ENCODE measurements at regions of chr14 and their contacts with region 1.

Region 1: DNA sequence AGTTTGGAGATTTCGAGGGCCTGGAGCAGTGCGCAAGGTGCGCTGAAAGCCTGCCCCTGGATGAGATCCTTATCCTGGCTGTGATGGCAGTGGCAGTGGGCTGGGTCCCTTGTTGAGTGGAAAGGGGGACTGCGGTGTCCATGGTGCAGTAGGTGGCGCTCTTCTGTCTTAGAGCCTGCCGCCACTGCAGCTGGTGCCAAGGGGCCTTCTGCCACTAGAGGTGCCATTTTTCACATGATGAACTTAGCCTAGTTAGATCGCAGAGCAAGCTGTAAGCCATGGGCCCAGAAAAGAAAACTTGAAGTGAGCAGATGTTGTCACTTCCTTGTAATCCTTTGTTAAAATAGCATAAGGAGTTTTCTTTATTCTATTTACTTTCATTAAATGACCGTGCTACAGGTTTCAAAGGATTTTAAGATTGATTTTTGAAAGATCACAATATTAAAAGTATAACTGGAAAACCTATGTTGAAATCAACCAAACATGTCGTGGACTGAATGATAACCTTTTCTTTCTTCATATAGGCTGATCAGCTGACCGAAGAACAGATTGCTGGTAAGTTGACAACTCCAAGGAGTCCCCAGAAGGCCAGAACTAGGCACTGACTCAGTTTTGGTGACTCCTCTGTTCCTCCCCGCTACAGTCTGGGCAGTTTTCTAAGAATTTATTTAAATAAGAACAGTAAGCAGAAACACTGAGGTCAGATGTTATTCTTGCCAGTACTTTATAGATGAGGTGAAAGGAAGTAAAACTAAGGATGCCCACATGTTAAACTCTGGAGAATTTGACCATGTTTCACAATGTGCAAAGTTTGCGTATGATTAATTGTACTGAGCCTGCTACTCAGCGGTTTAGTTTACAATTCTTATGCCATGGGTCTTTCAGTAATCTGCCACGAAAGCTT is 3.0 kb downstream of the CALM1 start:
- DNase-seq: peak; percentile 78
- H3K4me3 ChIP-seq: peak overlapping the region; percentile 40 to 98 (median 91)
- H3K27ac ChIP-seq: peak overlapping the region; percentile 71
- H3K4me1 ChIP-seq: peaks cover 37% of the 10 kb centered on the region
- H3K27me3 ChIP-seq: no peaks in the 10 kb centered on the region
- CTCF ChIP-seq: peak; percentile 100

Region 2: GRCh38 chr14:90331497-90332435 is 68.0 kb before region 1 on chr14 and contains the start of gene NRDE2:
- CTCF ChIA-PET with region 1: no interaction called
- dilution Hi-C with region 1: no loop called
- in situ Hi-C with region 1: no loop called
- intact Hi-C with region 1: loop called (anchors 1 kb)
- DNase-seq: peak; percentile 90
- H3K4me3 ChIP-seq: peak within 1 kb of the TSS; percentile 59 to 71 (median 68)
- H3K27ac ChIP-seq: peak within 1 kb of the TSS; percentile 74
- H3K4me1 ChIP-seq: peaks cover 8% of the 10 kb centered on the region
- H3K27me3 ChIP-seq: peaks cover 3% of the 10 kb centered on the region
- CTCF ChIP-seq: no peak
- total RNA-seq, gene NRDE2: 10.3 to 12.7 TPM

Region 3: GRCh38 chr14:90518941-90519256 is 119.1 kb after region 1 on chr14:
- CTCF ChIA-PET with region 1: interaction called, 7 read pairs
- dilution Hi-C with region 1: no loop called
- in situ Hi-C with region 1: no loop called
- intact Hi-C with region 1: loop called (anchors 1 kb)
- DNase-seq: no peak
- H3K4me3 ChIP-seq: no peak overlapping the region
- H3K27ac ChIP-seq: no peak overlapping the region
- H3K4me1 ChIP-seq: peaks cover 17% of the 10 kb centered on the region
- H3K27me3 ChIP-seq: no peaks in the 10 kb centered on the region
- CTCF ChIP-seq: peak; percentile 46 to 62

Region 4: DNA sequence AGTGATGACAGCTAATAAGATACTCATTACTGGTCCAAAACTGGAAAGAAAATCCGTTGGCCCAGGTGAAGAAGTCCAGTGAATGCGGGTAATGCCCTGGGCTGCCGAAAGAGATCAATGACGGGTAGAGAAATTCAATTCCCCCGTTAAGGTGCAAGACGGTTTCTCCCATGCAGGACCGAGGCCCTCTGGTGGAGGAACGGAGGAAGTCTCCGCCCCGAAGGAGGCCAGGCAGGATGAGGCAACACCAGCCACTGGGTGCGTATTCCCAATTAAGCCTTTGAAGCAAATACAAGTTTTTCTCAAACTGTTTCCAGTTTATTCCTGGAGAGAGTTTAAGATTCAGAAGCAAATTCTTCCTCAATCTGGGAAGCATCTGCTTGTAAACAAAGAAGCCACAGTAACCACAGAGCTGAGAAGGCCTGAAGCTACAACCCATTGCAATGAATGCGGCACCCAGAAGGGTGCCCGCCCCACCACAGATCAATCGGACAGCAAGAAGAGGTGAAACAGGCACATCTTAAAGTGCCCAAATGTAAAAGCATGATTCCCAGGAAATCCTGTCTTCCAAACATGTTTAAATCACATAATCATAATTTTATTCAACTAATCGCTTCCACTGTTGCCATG is 297.9 kb after region 1 on chr14:
- CTCF ChIA-PET with region 1: no interaction called
- dilution Hi-C with region 1: no loop called
- in situ Hi-C with region 1: loop called in 1 of 2 experiments (anchors 5 kb)
- intact Hi-C with region 1: loop called (anchors 1 kb)
- DNase-seq: peak; percentile 62
- H3K4me3 ChIP-seq: no peak overlapping the region
- H3K27ac ChIP-seq: no peak overlapping the region
- H3K4me1 ChIP-seq: no peaks in the 10 kb centered on the region
- H3K27me3 ChIP-seq: no peaks in the 10 kb centered on the region
- CTCF ChIP-seq: peak; percentile 94 to 95

Region 5: DNA sequence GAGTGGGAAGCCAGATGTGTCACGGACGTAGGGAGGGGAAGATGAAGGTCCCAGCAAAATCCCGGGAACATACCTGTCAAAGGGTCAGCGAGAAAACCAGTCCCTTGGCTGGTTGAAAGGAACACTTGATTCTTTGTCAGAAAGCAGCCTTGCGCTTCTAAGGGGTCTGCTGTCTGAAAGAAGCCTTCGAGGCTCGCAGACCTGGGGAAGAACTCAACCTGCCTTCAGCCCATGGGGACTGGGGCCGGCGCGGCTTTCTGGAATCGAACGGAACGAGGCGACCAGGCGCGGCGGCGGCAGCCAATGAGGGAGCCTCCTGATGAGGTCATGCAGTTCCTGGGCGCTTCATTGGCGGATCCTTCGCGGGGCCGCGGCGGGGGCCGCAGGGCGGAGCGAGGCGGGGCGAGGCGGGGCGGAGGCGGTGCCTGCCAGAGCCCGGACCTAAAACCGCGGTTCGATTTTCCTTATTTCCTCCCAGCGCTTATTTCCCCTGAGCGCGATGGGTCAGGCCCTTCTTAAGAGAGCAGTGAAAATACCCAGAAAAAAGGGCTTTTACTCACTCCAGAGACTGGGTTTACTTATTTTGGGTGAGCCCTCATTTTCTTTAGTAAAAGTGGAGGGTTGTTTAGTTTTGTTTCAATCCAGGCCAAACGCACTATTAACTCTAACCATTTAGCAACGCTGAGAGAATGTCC is 428.3 kb after region 1 on chr14:
- CTCF ChIA-PET with region 1: no interaction called
- dilution Hi-C with region 1: no loop called
- in situ Hi-C with region 1: no loop called
- intact Hi-C with region 1: loop called (anchors 10 kb)
- DNase-seq: peak; percentile 80
- H3K4me3 ChIP-seq: peak overlapping the region; percentile 11 to 42 (median 21)
- H3K27ac ChIP-seq: no peak overlapping the region
- H3K4me1 ChIP-seq: peaks cover 11% of the 10 kb centered on the region
- H3K27me3 ChIP-seq: no peaks in the 10 kb centered on the region
- CTCF ChIP-seq: no peak